AG04449 (cell line): ENCODE measurements at regions of chr16 and their contacts with region 1.

Region 1: DNA sequence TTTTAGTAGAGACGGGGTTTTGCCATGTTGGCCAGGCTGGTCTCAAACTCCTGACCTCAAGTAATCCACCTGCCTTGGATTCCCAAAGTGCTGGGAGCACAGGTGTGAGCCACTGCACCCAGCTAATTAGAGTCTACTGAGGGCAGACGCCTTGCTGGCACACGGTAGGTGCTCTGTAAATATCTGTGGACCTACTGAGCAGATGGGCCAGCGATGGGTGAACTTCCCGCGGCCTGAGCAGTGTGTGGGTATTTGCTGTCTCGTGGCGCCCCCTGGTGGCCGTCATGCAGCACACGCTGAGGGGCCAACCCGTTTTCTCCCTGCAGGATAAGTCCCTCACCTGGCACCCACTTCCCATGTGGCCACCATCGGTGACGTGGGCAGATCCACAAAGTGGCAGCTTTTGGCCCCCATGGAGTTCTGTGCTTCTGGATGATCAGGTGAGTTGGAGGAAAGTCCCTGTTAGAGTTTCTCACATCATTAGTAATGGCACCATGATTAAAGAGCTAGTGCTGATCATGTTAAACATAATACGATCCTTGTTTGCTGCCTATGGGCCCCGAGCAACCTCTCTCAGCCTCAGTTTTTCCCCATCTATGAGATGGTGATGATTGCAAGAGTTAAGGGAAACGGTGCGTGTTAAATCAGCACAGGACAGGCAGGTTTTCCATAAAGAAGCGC is 40.7 kb downstream of the ZDHHC7 start:
- DNase-seq: peak; percentile 16
- H3K4me3 ChIP-seq: no peak overlapping the region
- CTCF ChIP-seq: peak; percentile 87

Region 2: DNA sequence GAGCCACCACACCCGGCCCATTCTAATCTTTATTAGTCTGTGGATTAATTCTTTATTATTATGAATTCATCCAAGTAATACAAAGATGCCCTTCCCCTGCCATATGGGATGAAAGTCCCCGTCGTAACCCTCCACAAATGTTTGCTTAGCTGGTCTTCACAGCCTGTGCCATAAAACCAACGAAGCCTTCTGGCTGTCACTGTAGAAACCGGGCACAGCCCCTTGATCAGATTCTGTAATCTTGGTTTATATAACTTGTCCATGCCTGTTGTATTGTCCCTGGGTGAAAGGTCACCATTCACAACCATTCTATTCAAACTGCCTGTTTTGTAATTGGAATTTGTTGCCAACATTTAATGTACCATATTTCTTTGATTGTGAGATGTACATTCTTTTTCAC is 535.8 kb before region 1 on chr16:
- CTCF ChIA-PET with region 1: no interaction called
- POLR2A ChIA-PET with region 1: no interaction called
- DNase-seq: no peak
- H3K4me3 ChIP-seq: no peak overlapping the region
- CTCF ChIP-seq: no peak

Region 3: GRCh38 chr16:84726079-84726668 is 244.4 kb before region 1 on chr16:
- CTCF ChIA-PET with region 1: interaction called, 22 read pairs
- POLR2A ChIA-PET with region 1: no interaction called
- DNase-seq: no peak
- H3K4me3 ChIP-seq: no peak overlapping the region
- CTCF ChIP-seq: peak; percentile 88

Region 4: GRCh38 chr16:84754353-84754856 is 216.2 kb before region 1 on chr16:
- CTCF ChIA-PET with region 1: interaction called, 475 read pairs
- POLR2A ChIA-PET with region 1: interaction called, 3 read pairs
- DNase-seq: peak; percentile 67
- H3K4me3 ChIP-seq: no peak overlapping the region
- CTCF ChIP-seq: peak; percentile 56

Region 5: DNA sequence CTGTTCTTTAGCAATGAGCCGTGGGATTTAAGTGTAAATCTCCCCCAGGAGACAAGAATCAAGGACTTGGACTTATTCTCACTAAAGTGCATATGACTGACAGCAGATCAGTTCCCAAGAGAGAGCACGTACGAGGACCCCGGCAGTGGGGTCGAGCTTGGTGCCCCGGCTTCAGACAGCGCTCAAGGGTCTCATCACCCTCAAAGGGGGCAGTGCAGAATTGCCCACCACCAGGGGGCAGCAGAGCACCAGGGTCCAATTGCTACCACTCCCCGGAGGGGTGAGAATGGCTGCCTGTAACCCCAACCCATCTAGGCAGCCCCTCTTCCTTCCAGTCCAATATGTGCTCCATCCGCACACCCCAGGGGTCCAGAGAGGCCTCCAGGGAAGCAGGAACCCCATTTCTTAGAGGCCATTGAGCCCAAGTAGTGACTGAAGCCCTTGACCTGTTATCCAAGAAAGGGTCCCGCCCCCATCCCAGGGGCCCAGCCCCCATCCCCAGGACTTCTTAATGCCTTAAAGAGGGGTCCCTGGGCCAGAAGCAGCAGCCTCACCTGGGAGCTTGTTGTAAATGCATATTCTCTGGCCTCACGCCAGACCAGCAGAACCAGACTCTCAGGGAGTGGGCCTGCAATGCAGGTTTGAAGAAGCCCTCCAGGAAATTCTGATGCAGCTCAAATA is 45.4 kb before region 1 on chr16:
- CTCF ChIA-PET with region 1: interaction called, 32 read pairs
- POLR2A ChIA-PET with region 1: no interaction called
- DNase-seq: no peak
- H3K4me3 ChIP-seq: no peak overlapping the region
- CTCF ChIP-seq: peak; percentile 72

Region 6: DNA sequence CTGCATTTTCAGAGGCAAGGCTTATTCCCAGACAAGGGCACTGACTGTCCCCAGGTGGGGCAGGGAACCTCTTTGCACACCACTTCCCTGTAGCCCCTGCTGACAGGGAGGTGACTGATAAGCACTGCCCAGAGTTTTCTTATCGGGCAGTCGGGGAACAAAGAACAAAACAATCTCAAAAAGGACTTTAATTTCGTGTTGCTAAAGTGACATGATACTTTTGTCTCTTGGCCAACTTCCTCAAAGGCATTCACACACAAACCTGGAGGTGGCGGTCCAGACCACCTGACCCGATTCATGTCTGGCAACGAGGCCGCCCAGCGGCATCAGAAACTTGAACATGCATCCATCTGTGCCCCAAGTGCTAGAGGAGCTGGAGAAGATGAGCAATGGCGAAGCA is 11.8 kb after region 1 on chr16:
- CTCF ChIA-PET with region 1: interaction called, 31 read pairs
- POLR2A ChIA-PET with region 1: no interaction called
- DNase-seq: no peak
- H3K4me3 ChIP-seq: no peak overlapping the region
- CTCF ChIP-seq: no peak

Region 7: DNA sequence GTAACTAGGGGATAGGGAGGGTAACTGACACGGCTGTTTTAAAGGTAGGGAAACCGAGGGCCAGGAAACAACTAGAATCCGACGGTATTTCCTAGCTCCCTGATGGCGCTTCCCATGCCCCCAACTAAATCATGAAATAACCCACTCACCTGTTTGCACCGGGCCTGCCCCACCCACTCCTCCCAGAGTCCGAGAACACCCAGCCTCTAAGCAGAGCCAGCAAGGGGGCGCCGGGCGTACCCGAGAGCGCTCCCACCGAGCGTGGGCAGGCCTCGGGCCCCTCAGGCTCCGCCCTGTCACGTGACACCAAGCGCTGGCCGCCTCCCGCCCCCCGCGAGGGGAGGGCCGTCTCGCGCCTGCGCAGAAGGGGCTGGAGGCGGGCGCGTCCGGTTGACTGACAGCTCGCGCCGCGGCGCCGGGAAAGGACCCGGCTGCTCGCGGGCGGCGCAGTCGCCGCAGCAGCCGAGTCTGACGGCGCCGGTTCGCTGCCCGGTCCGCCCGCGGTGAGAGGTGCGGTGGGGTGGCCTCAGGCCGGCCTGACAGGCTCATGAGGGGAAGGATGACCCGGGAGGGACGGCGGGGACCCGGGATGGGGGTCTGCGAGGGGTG is 56.9 kb after region 1 on chr16 and contains the start of gene KIAA0513:
- CTCF ChIA-PET with region 1: interaction called, 18 read pairs
- POLR2A ChIA-PET with region 1: no interaction called
- DNase-seq: no peak
- H3K4me3 ChIP-seq: peak within 1 kb of the TSS; percentile 81
- CTCF ChIP-seq: peak; percentile 34